ENCODE measurements at regions of chr16 and their contacts with region 1.

Region 1: DNA sequence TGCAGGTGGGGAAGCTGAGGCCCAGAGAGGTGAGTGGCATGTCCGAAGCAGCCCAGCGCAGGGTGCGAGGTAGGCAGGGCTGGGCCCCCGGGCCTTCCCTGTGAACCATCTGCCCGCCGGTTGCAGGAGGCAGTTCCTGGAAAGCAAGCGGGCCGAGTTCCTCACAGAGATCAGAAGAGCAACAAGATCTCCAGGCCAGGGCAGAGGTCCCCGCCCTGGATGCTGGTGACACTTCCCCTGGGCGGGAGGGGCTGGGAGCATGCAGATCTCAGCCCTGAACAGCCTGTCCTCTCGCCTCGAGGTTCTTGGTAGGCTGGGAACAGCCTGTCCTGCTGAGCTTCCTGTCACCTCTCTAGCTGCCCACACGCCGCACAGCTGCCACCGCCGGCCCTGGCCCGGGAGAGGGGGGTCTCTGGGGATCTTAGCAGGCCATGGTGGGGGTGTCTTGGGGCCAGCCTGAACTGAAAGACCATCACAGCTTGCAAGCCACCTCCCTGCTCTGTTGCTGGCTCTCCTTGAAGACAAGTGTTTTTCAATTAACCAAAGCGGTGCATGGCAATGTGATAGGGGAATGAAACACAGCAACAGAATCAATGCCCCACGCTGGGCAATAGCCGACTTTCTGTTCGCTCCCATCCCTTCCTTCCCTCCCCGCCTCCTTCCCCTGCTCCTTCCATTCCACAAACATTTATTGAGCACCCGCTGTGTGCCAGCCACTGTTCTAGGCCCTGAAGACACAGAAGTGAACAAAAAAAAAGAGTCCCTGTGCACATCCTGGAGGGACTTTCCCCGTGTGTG is 31.7 kb downstream of the SOCS1 start:
- DNase-seq: peak; percentile 91
- ATAC-seq: peak; percentile 65
- H3K4me3 Mint-ChIP-seq: peak overlapping the region; percentile 63
- H3K27ac Mint-ChIP-seq: peak overlapping the region; percentile 98
- H3K4me1 Mint-ChIP-seq: peaks cover 55% of the 10 kb centered on the region
- H3K27me3 Mint-ChIP-seq: no peaks in the 10 kb centered on the region
- CTCF ChIP-seq: no peak

Region 2: DNA sequence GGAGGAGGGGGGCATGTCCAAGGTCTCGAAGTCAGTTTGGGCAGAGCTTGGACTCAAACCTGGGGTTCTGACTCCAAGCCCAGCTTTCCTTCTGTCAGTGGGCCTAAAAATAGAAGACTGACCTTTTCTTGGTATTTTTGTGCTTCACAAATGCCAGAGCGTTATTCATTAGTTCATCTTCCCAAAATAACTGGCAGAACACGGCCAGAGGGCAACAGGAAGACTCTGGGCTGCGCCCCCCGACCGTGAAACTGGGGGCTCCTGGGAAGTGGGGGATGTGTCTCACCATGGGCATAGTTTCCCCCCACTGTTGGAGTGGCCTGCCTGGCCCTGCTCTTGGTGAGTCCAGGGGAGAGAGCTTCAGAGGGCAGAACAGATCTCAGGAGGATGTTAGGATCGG is 62.3 kb before region 1 on chr16:
- CTCF ChIA-PET with region 1: interaction called, 7 read pairs
- POLR2A ChIA-PET with region 1: interaction called, 6 read pairs
- intact Hi-C with region 1: loop called (anchors 2 kb)
- DNase-seq: no peak
- ATAC-seq: no peak
- H3K4me3 Mint-ChIP-seq: no peak overlapping the region
- H3K27ac Mint-ChIP-seq: peak overlapping the region; percentile 86
- H3K4me1 Mint-ChIP-seq: peaks cover 55% of the 10 kb centered on the region
- H3K27me3 Mint-ChIP-seq: no peaks in the 10 kb centered on the region
- CTCF ChIP-seq: no peak

Region 3: DNA sequence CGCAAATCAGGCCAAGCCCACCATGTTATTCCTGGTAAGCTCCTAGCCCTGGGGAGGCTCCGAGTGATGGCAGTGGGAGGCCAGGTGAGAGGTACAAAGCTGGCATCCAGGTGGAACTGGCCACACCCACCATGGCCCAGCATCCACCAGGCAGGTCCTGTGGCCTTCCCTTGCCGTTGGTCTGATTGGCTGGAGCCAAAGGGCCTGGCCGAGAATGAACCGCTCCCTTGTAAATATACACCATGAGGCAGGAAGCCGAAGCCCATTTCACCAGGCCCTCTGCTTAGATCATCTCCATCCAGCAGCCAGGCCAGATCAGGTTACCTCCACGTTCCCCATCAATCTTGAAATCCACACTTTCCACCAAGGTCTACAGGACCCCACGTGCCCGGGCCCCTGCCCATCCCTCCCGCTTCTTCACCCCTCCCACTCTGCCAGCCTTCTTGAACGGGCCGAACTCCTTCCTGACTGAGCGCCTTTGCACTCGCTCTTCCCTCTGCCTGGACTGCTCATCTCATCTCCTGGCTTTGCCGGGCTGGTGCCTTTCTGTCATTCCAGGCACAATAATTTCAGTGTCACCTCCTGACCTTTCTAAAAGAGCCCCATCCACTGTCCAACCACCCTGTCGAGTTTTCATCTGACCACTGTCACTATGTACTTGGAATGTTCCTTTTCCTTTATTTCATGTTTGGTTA is 25.9 kb after region 1 on chr16:
- CTCF ChIA-PET with region 1: interaction called, 21 read pairs
- POLR2A ChIA-PET with region 1: interaction called, 146 read pairs
- intact Hi-C with region 1: no loop called
- DNase-seq: peak; percentile 42
- ATAC-seq: no peak
- H3K4me3 Mint-ChIP-seq: peak overlapping the region; percentile 9
- H3K27ac Mint-ChIP-seq: peak overlapping the region; percentile 71
- H3K4me1 Mint-ChIP-seq: peaks cover 47% of the 10 kb centered on the region
- H3K27me3 Mint-ChIP-seq: no peaks in the 10 kb centered on the region
- CTCF ChIP-seq: no peak